GM12878 (cell line): ENCODE measurements at regions of chr3 and their contacts with region 1.

Region 1: GRCh38 chr3:77859156-77859555 is 819.3 kb downstream of the ROBO2 start:
- DNase-seq: no peak
- ATAC-seq: no peak
- H3K4me3 ChIP-seq: no peak overlapping the region
- H3K27ac ChIP-seq: no peak overlapping the region
- H3K4me1 ChIP-seq: no peaks in the 10 kb centered on the region
- H3K27me3 ChIP-seq: no peaks in the 10 kb centered on the region
- CTCF ChIP-seq: no peak
- EP300 ChIP-seq: no peak
- POLR2A ChIP-seq: no peak
- RAD21 ChIP-seq: no peak

Region 2: DNA sequence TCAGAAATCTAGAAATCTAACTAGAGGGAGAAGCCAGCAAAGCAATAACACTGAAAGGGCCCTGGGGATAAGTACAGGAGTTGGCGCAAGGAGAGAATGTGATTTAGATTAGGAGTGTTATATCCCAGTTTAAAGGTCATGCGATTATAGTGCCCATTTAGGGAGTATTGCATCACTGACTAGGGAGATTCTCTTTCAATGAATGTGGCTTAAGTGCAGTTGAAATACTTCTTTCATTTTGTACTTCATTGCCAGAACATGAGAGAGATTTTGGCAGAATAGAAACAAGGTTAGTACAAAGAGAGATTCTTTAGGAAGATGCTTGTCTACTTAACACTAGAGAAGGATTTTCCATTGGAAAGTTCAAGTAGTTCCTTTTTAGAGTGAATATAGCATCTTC is 805.4 kb before region 1 on chr3:
- CTCF ChIA-PET with region 1: no interaction called
- POLR2A ChIA-PET with region 1: no interaction called
- RAD21 ChIA-PET with region 1: no interaction called
- SMC1A ChIA-PET with region 1: no interaction called
- in situ Hi-C with region 1: no loop called
- intact Hi-C with region 1: no loop called
- DNase-seq: no peak
- ATAC-seq: no peak
- H3K4me3 ChIP-seq: no peak overlapping the region
- H3K27ac ChIP-seq: no peak overlapping the region
- H3K4me1 ChIP-seq: no peaks in the 10 kb centered on the region
- H3K27me3 ChIP-seq: no peaks in the 10 kb centered on the region
- CTCF ChIP-seq: no peak
- EP300 ChIP-seq: no peak
- POLR2A ChIP-seq: no peak
- RAD21 ChIP-seq: no peak

Region 3: GRCh38 chr3:77682162-77682561 is 177.0 kb before region 1 on chr3:
- CTCF ChIA-PET with region 1: no interaction called
- POLR2A ChIA-PET with region 1: no interaction called
- RAD21 ChIA-PET with region 1: no interaction called
- SMC1A ChIA-PET with region 1: no interaction called
- in situ Hi-C with region 1: no loop called
- intact Hi-C with region 1: no loop called
- DNase-seq: no peak
- ATAC-seq: no peak
- H3K4me3 ChIP-seq: no peak overlapping the region
- H3K27ac ChIP-seq: no peak overlapping the region
- H3K4me1 ChIP-seq: no peaks in the 10 kb centered on the region
- H3K27me3 ChIP-seq: no peaks in the 10 kb centered on the region
- CTCF ChIP-seq: no peak
- EP300 ChIP-seq: no peak
- POLR2A ChIP-seq: no peak
- RAD21 ChIP-seq: no peak

Region 4: GRCh38 chr3:77873598-77873997 is 14.4 kb after region 1 on chr3:
- CTCF ChIA-PET with region 1: no interaction called
- POLR2A ChIA-PET with region 1: interaction called, 10 read pairs
- RAD21 ChIA-PET with region 1: no interaction called
- SMC1A ChIA-PET with region 1: no interaction called
- in situ Hi-C with region 1: no loop called
- intact Hi-C with region 1: no loop called
- DNase-seq: no peak
- ATAC-seq: no peak
- H3K4me3 ChIP-seq: no peak overlapping the region
- H3K27ac ChIP-seq: no peak overlapping the region
- H3K4me1 ChIP-seq: no peaks in the 10 kb centered on the region
- H3K27me3 ChIP-seq: no peaks in the 10 kb centered on the region
- CTCF ChIP-seq: no peak
- EP300 ChIP-seq: no peak
- POLR2A ChIP-seq: no peak
- RAD21 ChIP-seq: no peak